ENCODE measurements at regions of chr12 and their contacts with region 1.

Region 1: GRCh38 chr12:125056301-125056700 is 8.9 kb upstream of the AACS start:
- DNase-seq: no peak
- H3K4me3 ChIP-seq: no peak overlapping the region
- H3K27ac ChIP-seq: no peak overlapping the region
- H3K4me1 ChIP-seq: no peaks in the 10 kb centered on the region
- H3K27me3 ChIP-seq: no peaks in the 10 kb centered on the region
- CTCF ChIP-seq: no peak

Region 2: GRCh38 chr12:124979568-124979967 is 76.7 kb before region 1 on chr12:
- CTCF ChIA-PET with region 1: no interaction called
- dilution Hi-C with region 1: loop called (anchors 5 kb)
- in situ Hi-C with region 1: no loop called
- intact Hi-C with region 1: no loop called
- DNase-seq: no peak
- H3K4me3 ChIP-seq: no peak overlapping the region
- H3K27ac ChIP-seq: no peak overlapping the region
- H3K4me1 ChIP-seq: no peaks in the 10 kb centered on the region
- H3K27me3 ChIP-seq: no peaks in the 10 kb centered on the region
- CTCF ChIP-seq: no peak

Region 3: GRCh38 chr12:125006206-125006764 is 50.0 kb before region 1 on chr12:
- CTCF ChIA-PET with region 1: no interaction called
- dilution Hi-C with region 1: no loop called
- in situ Hi-C with region 1: no loop called
- intact Hi-C with region 1: no loop called
- DNase-seq: no peak
- H3K4me3 ChIP-seq: no peak overlapping the region
- H3K27ac ChIP-seq: no peak overlapping the region
- H3K4me1 ChIP-seq: no peaks in the 10 kb centered on the region
- H3K27me3 ChIP-seq: no peaks in the 10 kb centered on the region
- CTCF ChIP-seq: no peak

Region 4: GRCh38 chr12:125097427-125097826 is 41.1 kb after region 1 on chr12:
- CTCF ChIA-PET with region 1: no interaction called
- dilution Hi-C with region 1: loop called (anchors 5 kb)
- in situ Hi-C with region 1: no loop called
- intact Hi-C with region 1: no loop called
- DNase-seq: no peak
- H3K4me3 ChIP-seq: no peak overlapping the region
- H3K27ac ChIP-seq: no peak overlapping the region
- H3K4me1 ChIP-seq: peaks cover 7% of the 10 kb centered on the region
- H3K27me3 ChIP-seq: no peaks in the 10 kb centered on the region
- CTCF ChIP-seq: no peak

Measured in mammary epithelial cell (primary cell).